ENCODE measurements at regions of chr3 and their contacts with region 1.

Region 1: GRCh38 chr3:141441381-141442364 is 45.2 kb upstream of the RASA2 start:
- DNase-seq: peak; percentile 90
- ATAC-seq: peak; percentile 100
- H3K4me3 Mint-ChIP-seq: peak overlapping the region; percentile 60
- H3K27ac Mint-ChIP-seq: peak overlapping the region; percentile 92
- H3K4me1 Mint-ChIP-seq: peaks cover 36% of the 10 kb centered on the region
- H3K27me3 Mint-ChIP-seq: no peaks in the 10 kb centered on the region

Region 2: DNA sequence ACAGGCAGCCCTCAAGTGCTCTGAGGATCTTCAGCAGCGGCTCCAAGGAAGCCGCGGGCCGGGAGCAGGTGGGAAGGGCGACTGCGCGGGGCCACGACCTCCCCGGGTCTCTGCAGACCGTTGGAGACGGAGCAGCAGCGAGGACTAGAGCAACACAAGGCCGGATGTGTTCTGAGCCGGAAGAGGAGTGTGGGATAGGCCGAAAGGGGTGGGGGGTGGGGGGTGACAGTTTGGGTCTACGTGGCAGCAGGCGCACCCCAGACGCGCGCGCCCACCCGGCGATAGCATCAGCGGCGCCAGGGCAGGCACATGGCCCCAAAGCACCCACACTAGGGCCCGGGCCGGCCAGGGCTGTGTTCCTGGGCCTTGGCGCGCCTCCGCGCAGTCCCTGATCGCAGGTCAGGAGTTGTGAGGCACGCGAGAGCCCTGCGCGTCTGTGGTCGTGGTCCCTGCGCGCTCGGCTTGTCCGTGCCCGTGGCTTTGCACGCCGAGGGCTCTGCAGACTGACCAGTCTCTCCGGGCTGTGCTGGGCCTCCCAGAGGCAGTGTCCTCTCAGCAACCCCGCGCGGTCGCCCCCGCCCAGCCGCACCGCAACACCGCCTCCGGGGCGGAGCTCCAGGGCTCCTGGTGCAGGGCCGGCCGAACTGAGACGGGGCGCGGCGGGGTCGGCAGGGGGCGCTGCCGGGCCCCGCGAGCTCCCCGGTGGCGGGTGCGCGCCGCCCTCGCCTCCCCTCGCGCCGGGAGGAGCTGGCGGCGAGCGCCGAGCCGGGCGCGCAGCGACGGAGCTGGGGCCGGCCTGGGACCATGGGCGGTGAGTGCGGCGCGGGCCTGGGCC is 210.4 kb before region 1 on chr3 and contains the start of gene PXYLP1:
- CTCF ChIA-PET with region 1: interaction called, 10 read pairs
- DNase-seq: peak; percentile 95
- ATAC-seq: peak; percentile 95
- H3K4me3 Mint-ChIP-seq: peak within 1 kb of the TSS; percentile 73
- H3K27ac Mint-ChIP-seq: peak within 1 kb of the TSS; percentile 98
- H3K4me1 Mint-ChIP-seq: peaks cover 55% of the 10 kb centered on the region
- H3K27me3 Mint-ChIP-seq: no peaks in the 10 kb centered on the region
- total RNA-seq, gene PXYLP1: 10.3 to 18.4 TPM

Region 3: DNA sequence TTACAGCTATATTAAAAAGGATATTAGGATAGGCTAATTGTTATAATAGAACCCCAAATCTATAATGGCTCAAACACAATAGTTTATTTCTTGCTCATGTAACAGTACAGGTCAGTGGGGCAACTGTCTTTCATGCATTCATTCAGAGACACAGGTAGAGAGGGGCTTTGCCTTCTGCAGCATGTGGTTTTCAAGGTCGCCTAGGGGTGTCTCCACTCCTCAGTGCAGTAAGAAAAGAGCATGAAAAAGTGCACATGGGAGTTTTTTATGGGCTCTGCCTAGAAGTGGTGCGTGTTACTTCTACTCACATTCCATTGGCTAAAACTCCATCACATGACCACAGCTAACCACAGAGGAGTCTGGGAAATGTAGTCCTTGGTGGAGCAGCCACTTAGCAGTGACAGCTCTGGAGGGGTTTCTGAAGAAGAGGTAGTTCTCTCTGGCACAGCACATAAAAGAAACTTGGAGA is 71.6 kb before region 1 on chr3:
- CTCF ChIA-PET with region 1: interaction called, 43 read pairs
- DNase-seq: peak; percentile 85
- ATAC-seq: peak; percentile 96
- H3K4me3 Mint-ChIP-seq: no peak overlapping the region
- H3K27ac Mint-ChIP-seq: peak overlapping the region; percentile 52
- H3K4me1 Mint-ChIP-seq: peaks cover 61% of the 10 kb centered on the region
- H3K27me3 Mint-ChIP-seq: no peaks in the 10 kb centered on the region

Region 4: GRCh38 chr3:141402476-141403171 is 39.0 kb before region 1 on chr3:
- CTCF ChIA-PET with region 1: interaction called, 10 read pairs
- DNase-seq: peak; percentile 69
- ATAC-seq: peak; percentile 72
- H3K4me3 Mint-ChIP-seq: peak overlapping the region; percentile 87
- H3K27ac Mint-ChIP-seq: peak overlapping the region; percentile 89
- H3K4me1 Mint-ChIP-seq: peaks cover 63% of the 10 kb centered on the region
- H3K27me3 Mint-ChIP-seq: no peaks in the 10 kb centered on the region

Region 5: DNA sequence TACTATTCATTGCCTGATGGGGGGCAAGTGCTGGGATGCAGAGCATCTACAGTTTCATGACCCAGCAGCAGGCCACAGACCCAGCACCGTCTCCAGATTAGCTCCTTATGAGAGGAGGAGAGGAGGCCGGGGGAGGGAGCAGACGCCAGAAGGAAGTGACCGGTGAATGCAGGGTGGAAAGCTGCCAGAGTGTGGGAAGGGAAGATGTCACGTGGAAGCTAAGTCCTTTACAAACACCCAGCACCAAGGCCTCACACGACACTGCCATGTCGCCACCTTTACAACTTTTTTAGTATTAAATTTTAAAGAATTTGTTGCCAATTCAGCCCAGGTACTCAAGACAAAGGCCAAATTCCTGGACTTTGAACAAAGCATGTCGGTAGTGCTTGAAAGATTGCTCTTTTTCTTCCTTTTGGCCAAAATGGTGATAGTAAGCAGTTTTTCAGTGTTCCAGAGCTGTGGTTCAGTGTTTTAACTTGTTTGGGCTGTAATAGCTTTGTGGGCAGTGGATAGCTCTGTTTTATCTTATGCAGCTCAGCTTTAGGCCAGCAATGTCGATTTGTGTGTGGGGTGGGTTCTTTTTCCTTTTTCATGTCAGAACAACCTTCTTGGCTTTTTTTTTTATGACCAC is 15.2 kb before region 1 on chr3:
- CTCF ChIA-PET with region 1: interaction called, 36 read pairs
- DNase-seq: no peak
- ATAC-seq: no peak
- H3K4me3 Mint-ChIP-seq: no peak overlapping the region
- H3K27ac Mint-ChIP-seq: no peak overlapping the region
- H3K4me1 Mint-ChIP-seq: peaks cover 31% of the 10 kb centered on the region
- H3K27me3 Mint-ChIP-seq: no peaks in the 10 kb centered on the region

Measured in activated CD8-positive, alpha-beta memory T cell treated with anti-CD3 and anti-CD28 coated beads, Interleukin-2, amount 10 ng/mL, durations not matched to agents 7 days and 5 days (primary cell).